Activated naive CD4-positive, alpha-beta T cell treated with anti-CD3 and anti-CD28 coated beads, Interleukin-2, amount 10 ng/mL, durations not matched to agents 7 days and 5 days (primary cell): ENCODE measurements at regions of chr15 and their contacts with region 1.

Region 1: GRCh38 chr15:99059010-99059981 is 45.6 kb upstream of the SYNM start:
- DNase-seq: peak; percentile 53
- H3K4me3 Mint-ChIP-seq: peak overlapping the region; percentile 62
- H3K27ac Mint-ChIP-seq: no peak overlapping the region
- H3K4me1 Mint-ChIP-seq: peaks cover 12% of the 10 kb centered on the region
- H3K27me3 Mint-ChIP-seq: peaks cover 67% of the 10 kb centered on the region

Region 2: DNA sequence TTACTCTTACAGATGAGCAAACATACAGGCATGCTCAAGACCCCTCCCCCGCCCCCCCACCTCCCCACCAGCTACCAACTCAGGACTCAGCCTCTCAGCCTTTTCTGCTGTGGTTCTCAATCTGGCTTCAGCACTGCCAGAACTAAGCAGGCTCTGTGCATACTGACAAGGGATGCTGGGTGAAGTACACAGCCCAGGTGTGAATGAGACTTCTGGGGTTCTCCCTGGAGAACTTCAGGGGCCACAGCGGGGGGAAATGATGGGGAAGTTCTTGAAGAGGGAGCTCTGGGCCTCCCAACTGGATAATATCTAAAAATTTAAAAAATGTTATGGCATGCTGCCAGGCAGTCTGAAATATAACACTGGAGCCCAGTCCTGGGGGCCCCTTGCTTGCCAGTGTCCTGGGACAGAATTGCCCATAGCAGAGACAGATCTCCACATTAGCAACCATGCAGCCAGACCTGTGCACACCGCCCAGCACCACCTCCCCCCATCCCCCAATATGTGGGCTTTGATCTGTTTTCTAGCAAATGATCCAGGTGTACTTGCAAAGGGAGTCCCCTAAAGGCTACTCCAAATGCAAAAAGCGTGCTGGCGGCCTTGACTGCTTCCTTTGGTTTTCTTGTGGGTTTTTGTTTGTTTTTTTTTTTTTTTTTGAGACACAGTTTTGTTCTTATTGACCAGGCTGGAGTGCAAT is 93.1 kb before region 1 on chr15:
- CTCF ChIA-PET with region 1: no interaction called
- DNase-seq: no peak
- H3K4me3 Mint-ChIP-seq: no peak overlapping the region
- H3K27ac Mint-ChIP-seq: no peak overlapping the region
- H3K4me1 Mint-ChIP-seq: no peaks in the 10 kb centered on the region
- H3K27me3 Mint-ChIP-seq: no peaks in the 10 kb centered on the region

Region 3: DNA sequence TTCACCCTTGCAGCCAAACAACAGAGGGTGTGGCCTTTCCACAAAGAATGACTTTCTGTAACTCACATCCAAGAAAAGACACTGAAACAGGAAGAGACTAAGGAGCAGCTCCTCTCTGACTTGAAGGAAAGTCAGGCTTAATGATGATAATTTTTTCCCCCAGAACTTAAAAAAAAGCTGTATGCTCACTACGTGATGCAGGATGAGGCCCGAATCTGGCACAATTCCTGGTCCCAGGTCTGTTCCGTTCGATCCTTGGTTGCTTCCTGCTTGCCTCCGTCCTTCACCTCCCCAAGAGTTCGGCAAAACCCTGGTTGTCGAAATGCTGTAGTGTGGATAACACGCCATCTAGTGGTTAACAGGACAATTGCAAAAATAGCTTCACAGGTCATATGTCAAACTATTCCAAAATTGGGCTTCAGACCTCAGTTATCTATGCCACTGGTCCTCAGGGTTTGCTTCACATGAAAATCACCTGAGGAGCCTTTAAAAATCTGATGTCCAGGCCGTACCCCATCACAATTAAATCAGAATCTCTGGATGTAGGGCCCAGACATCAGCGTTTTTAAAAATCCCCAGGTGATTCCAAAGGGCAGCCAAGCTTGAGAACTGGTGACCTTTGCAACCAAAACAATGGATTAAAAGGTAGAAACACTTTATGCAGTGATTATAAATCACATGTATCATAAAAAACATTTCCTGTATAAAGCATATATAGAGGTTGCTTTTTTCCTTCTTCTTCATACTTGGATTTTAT is 17.4 kb after region 1 on chr15:
- CTCF ChIA-PET with region 1: interaction called, 18 read pairs
- DNase-seq: peak; percentile 50
- H3K4me3 Mint-ChIP-seq: peak overlapping the region; percentile 48
- H3K27ac Mint-ChIP-seq: no peak overlapping the region
- H3K4me1 Mint-ChIP-seq: peaks cover 7% of the 10 kb centered on the region
- H3K27me3 Mint-ChIP-seq: peaks cover 19% of the 10 kb centered on the region